Lower leg skin (tissue), 4 donors: ENCODE measurements at regions of chr14 and their contacts with region 1.

Region 1: DNA sequence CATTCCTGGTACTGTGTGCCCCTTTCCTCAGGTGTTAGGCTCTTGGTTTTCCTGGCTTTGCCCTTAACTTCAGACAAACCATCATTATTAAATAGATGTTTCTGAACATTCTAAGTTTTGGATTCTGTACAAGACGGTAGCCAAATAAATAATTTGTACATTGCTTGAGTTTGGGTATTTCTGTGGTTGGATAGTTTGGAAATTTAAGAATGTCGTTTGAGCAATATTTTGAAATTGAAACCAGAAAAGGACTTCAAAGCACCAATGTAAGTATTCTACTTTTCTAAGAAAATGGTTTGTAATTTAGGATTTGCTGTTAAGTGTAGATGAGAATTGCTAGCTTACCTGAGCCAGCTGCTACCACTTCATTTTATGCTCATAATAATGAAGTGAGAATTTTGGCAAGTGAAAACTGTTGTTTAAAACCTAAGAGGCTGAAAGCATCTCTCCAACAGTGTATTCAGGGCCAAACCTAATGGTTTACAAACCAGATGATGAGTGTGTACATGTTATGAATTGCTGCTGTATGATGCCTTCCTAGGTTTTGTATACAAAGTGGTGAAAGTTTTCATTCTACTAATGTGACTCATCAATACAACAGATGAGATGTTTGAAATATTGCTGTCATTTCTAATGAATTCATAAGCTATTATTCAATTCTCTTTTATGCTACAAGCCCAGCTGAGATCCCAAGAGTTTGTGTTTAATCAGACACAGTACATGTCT is 181.5 kb upstream of the PRKD1 start:
- DNase-seq: no peak
- H3K4me3 ChIP-seq: no peak overlapping the region
- CTCF ChIP-seq: no peak
- POLR2A ChIP-seq: no peak

Region 2: DNA sequence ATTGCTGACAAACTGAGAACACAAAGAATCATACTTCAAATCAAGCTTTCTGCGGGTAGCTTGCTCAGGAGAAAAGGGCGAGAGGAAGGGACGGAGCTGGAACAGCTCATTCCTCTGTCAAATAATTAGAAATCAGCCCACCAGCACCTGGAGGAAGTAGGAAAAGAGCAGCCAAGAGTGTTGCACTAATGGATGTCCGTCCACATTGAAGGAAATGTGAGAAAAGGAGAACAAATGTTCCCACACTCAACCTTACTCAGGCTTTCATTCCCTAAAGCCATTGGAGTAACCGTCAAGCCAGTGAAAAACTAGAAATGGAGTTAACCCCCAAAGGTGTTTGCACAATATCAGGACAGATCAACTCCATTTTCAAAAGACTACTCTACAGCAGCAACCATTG is 51.5 kb after region 1 on chr14:
- intact Hi-C with region 1: loop called (anchors 2 kb)
- DNase-seq: no peak
- H3K4me3 ChIP-seq: no peak overlapping the region
- CTCF ChIP-seq: no peak
- POLR2A ChIP-seq: no peak